ENCODE measurements at regions of chr2 and their contacts with region 1.

Region 1: DNA sequence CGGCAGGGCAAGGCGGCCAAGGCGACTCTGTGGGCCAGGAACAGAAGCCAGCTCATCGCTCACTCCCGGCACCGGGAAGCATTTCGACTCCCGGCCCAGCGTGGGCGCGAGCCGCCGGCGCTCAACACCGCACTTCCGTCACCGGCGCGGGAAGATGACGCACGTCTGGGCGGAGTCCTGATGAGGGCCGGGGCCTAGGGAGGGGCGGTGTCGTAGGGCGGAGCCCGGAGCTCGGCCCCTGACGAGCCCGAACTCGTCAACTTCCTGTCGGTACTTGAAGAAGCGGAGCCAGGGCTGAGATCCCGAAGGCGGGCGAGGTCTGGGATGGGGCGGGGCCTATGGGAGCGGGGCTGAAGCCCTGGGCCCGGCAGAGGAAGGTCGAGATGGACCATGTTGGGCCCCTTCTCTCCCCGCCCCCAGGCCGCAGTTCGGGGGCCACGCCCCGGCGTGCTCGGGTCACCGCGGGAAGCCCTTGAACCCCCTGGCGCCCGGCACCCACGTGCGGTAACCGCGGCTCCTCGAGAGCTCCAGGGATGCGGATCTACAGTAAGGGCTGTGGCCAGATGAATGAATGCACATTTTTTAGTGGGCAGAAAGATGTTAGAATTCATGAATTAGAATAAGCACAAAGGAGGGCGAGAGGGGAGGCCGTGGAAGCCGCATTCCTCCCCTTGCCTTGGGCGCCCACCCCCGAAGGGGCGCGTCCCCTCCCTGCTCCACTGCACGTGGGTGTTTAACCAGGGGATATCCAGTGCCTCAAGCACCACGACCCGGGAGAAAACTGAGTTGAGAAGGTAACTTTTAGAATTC is at the start of gene RNASEH1:
- DNase-seq: peak; percentile 99
- H3K4me3 ChIP-seq: peak within 1 kb of the TSS; percentile 81
- H3K4me3 Mint-ChIP-seq: peak within 1 kb of the TSS; percentile 92
- H3K27ac Mint-ChIP-seq: peak within 1 kb of the TSS; percentile 95
- H3K4me1 ChIP-seq: peaks cover 6% of the 10 kb centered on the region; the same call in 1 of the 2 replicates
- H3K4me1 Mint-ChIP-seq: peaks cover 12% of the 10 kb centered on the region
- H3K27me3 ChIP-seq: no peaks in the 10 kb centered on the region
- H3K27me3 Mint-ChIP-seq: no peaks in the 10 kb centered on the region
- CTCF ChIP-seq: no peak
- total RNA-seq, gene RNASEH1: 41.5 and 47.1 TPM in 2 replicates

Region 2: GRCh38 chr2:3001615-3002560 is 556.5 kb before region 1 on chr2:
- CTCF ChIA-PET with region 1: no interaction called
- POLR2A ChIA-PET with region 1: no interaction called
- intact Hi-C with region 1: no loop called
- DNase-seq: peak in 1 of 2 experiments; percentile 25
- H3K4me3 ChIP-seq: no peak overlapping the region
- H3K4me3 Mint-ChIP-seq: no peak overlapping the region
- H3K27ac Mint-ChIP-seq: no peak overlapping the region
- H3K4me1 ChIP-seq: no peaks in the 10 kb centered on the region
- H3K4me1 Mint-ChIP-seq: no peaks in the 10 kb centered on the region
- H3K27me3 ChIP-seq: no peaks in the 10 kb centered on the region
- H3K27me3 Mint-ChIP-seq: peaks cover 24% of the 10 kb centered on the region
- CTCF ChIP-seq: peak in 1 of 2 experiments; percentile 41

Region 3: GRCh38 chr2:3334392-3335345 is 223.7 kb before region 1 on chr2:
- CTCF ChIA-PET with region 1: no interaction called
- POLR2A ChIA-PET with region 1: no interaction called
- intact Hi-C with region 1: no loop called
- DNase-seq: no peak
- H3K4me3 ChIP-seq: no peak overlapping the region
- H3K4me3 Mint-ChIP-seq: no peak overlapping the region
- H3K27ac Mint-ChIP-seq: no peak overlapping the region
- H3K4me1 ChIP-seq: no peaks in the 10 kb centered on the region
- H3K4me1 Mint-ChIP-seq: no peaks in the 10 kb centered on the region
- H3K27me3 ChIP-seq: no peaks in the 10 kb centered on the region
- H3K27me3 Mint-ChIP-seq: no peaks in the 10 kb centered on the region
- CTCF ChIP-seq: no peak

Region 4: DNA sequence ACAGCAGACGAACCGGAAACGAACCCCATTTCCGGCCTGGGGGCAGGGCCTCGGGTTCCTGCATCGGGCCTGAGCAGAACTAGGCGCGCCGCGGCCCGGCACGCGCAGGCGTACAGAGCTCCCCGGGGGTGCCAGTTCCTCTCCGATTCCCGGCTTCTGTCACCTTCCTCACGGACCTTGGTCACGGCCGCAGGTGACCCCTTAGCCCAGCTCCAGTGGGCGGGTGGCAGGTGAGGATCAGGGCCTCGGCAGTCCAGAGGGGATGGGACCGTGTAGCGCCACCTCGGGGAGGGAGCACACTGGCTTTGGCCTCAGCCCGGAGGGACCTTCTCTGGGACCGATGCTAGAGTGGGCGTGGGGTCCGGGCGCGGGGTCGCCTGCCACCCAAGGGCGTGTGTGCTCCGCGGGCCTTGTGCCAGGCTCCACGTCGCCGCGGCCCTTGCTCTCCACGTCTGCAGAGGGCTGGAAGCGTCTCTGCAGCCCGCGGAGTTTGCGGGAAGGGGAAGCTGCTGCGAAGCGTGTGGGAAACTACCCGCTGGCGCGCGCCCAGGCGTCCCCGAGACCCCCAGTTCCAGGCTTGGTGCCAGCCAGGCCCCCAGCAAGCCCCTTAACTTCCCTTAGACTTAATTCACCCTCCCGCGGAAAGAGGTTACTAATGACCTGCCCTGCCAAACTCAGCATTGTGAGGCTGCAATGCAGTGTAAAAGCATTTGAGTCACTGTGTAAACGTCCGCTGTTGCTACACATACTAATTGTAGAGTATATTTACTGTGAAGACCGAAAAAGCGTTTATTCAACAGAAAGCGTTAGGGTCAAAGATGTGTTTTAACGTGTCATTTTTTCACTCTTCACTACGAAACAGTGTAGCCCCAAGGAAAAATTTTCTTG is 178.5 kb before region 1 on chr2 and contains the start of gene TRAPPC12:
- CTCF ChIA-PET with region 1: no interaction called
- POLR2A ChIA-PET with region 1: interaction called, 10 read pairs
- intact Hi-C with region 1: loop called (anchors 1 kb)
- DNase-seq: peak; percentile 95 to 97
- H3K4me3 ChIP-seq: peak within 1 kb of the TSS; percentile 91
- H3K4me3 Mint-ChIP-seq: peak within 1 kb of the TSS; percentile 99
- H3K27ac Mint-ChIP-seq: peak within 1 kb of the TSS; percentile 96
- H3K4me1 ChIP-seq: peaks cover 10% of the 10 kb centered on the region
- H3K4me1 Mint-ChIP-seq: peaks cover 6% of the 10 kb centered on the region
- H3K27me3 ChIP-seq: no peaks in the 10 kb centered on the region
- H3K27me3 Mint-ChIP-seq: no peaks in the 10 kb centered on the region
- CTCF ChIP-seq: peak in 1 of 2 experiments; percentile 79
- total RNA-seq, gene TRAPPC12: 84.2 and 85.0 TPM in 2 replicates

Region 5: GRCh38 chr2:3483227-3483985 is 75.0 kb before region 1 on chr2:
- CTCF ChIA-PET with region 1: interaction called, 4 read pairs
- POLR2A ChIA-PET with region 1: no interaction called
- intact Hi-C with region 1: loop called (anchors 1 kb)
- DNase-seq: peak; percentile 98 to 99
- H3K4me3 ChIP-seq: peak overlapping the region; percentile 42
- H3K4me3 Mint-ChIP-seq: peak overlapping the region; percentile 77
- H3K27ac Mint-ChIP-seq: peak overlapping the region; percentile 93
- H3K4me1 ChIP-seq: peaks cover 12% of the 10 kb centered on the region
- H3K4me1 Mint-ChIP-seq: peaks cover 10% of the 10 kb centered on the region
- H3K27me3 ChIP-seq: no peaks in the 10 kb centered on the region
- H3K27me3 Mint-ChIP-seq: no peaks in the 10 kb centered on the region
- CTCF ChIP-seq: no peak

Region 6: GRCh38 chr2:3518496-3519254 is 39.7 kb before region 1 on chr2:
- CTCF ChIA-PET with region 1: interaction called, 3 read pairs
- POLR2A ChIA-PET with region 1: interaction called, 12 read pairs
- intact Hi-C with region 1: loop called (anchors 1 kb)
- DNase-seq: peak; percentile 99
- H3K4me3 ChIP-seq: peak overlapping the region; percentile 94
- H3K4me3 Mint-ChIP-seq: peak overlapping the region; percentile 81
- H3K27ac Mint-ChIP-seq: peak overlapping the region; percentile 68
- H3K4me1 ChIP-seq: peaks cover 28% of the 10 kb centered on the region
- H3K4me1 Mint-ChIP-seq: peaks cover 39% of the 10 kb centered on the region
- H3K27me3 ChIP-seq: no peaks in the 10 kb centered on the region
- H3K27me3 Mint-ChIP-seq: no peaks in the 10 kb centered on the region
- CTCF ChIP-seq: no peak

Region 7: GRCh38 chr2:3536682-3537632 is 21.5 kb before region 1 on chr2:
- CTCF ChIA-PET with region 1: interaction called, 5 read pairs
- POLR2A ChIA-PET with region 1: interaction called, 15 read pairs
- intact Hi-C with region 1: loop called (anchors 1 kb)
- DNase-seq: peak; percentile 84 to 87
- H3K4me3 ChIP-seq: peak overlapping the region; percentile 54
- H3K4me3 Mint-ChIP-seq: peak overlapping the region; percentile 95
- H3K27ac Mint-ChIP-seq: peak overlapping the region; percentile 99
- H3K4me1 ChIP-seq: peaks cover 7% of the 10 kb centered on the region; the same call in 1 of the 2 replicates
- H3K4me1 Mint-ChIP-seq: peaks cover 7% of the 10 kb centered on the region
- H3K27me3 ChIP-seq: no peaks in the 10 kb centered on the region
- H3K27me3 Mint-ChIP-seq: no peaks in the 10 kb centered on the region
- CTCF ChIP-seq: peak; percentile 46 to 81

Region 8: GRCh38 chr2:3575534-3576262 is 17.3 kb after region 1 on chr2:
- CTCF ChIA-PET with region 1: interaction called, 5 read pairs
- POLR2A ChIA-PET with region 1: interaction called, 22 read pairs
- intact Hi-C with region 1: loop called (anchors 1 kb)
- DNase-seq: no peak
- H3K4me3 ChIP-seq: peak overlapping the region; percentile 97
- H3K4me3 Mint-ChIP-seq: peak overlapping the region; percentile 95
- H3K27ac Mint-ChIP-seq: peak overlapping the region; percentile 96
- H3K4me1 ChIP-seq: peaks cover 17% of the 10 kb centered on the region
- H3K4me1 Mint-ChIP-seq: peaks cover 34% of the 10 kb centered on the region
- H3K27me3 ChIP-seq: no peaks in the 10 kb centered on the region
- H3K27me3 Mint-ChIP-seq: no peaks in the 10 kb centered on the region
- CTCF ChIP-seq: no peak

Region 9: GRCh38 chr2:3644891-3645605 is 86.6 kb after region 1 on chr2:
- CTCF ChIA-PET with region 1: no interaction called
- POLR2A ChIA-PET with region 1: no interaction called
- intact Hi-C with region 1: loop called (anchors 1 kb)
- DNase-seq: no peak
- H3K4me3 ChIP-seq: no peak overlapping the region
- H3K4me3 Mint-ChIP-seq: no peak overlapping the region
- H3K27ac Mint-ChIP-seq: peak overlapping the region; percentile 62
- H3K4me1 ChIP-seq: peaks cover 18% of the 10 kb centered on the region
- H3K4me1 Mint-ChIP-seq: peaks cover 21% of the 10 kb centered on the region
- H3K27me3 ChIP-seq: no peaks in the 10 kb centered on the region
- H3K27me3 Mint-ChIP-seq: no peaks in the 10 kb centered on the region
- CTCF ChIP-seq: no peak

Region 10: DNA sequence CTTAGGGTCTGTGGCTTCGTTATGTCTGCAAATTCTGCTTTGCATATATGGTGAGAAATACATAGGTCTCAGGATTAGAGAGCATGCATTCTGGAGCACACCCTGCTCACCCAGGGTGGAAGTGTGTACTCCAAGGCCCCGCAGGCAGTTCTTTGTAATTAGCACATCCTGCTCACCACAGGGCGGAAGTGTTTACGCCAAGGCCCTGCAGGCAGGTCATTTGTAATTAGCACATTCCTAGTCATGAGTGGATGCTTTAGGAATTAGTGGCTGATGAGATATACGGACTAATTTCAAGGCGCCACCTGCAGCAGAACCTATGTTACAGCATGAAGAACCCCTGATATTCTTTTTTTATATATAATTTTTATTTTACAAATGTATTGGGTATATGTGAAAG is 103.8 kb after region 1 on chr2:
- CTCF ChIA-PET with region 1: no interaction called
- POLR2A ChIA-PET with region 1: no interaction called
- intact Hi-C with region 1: no loop called
- DNase-seq: peak in 1 of 2 experiments; percentile 21
- H3K4me3 ChIP-seq: no peak overlapping the region
- H3K4me3 Mint-ChIP-seq: no peak overlapping the region
- H3K27ac Mint-ChIP-seq: no peak overlapping the region
- H3K4me1 ChIP-seq: no peaks in the 10 kb centered on the region
- H3K4me1 Mint-ChIP-seq: no peaks in the 10 kb centered on the region
- H3K27me3 ChIP-seq: no peaks in the 10 kb centered on the region
- H3K27me3 Mint-ChIP-seq: no peaks in the 10 kb centered on the region
- CTCF ChIP-seq: no peak

Measured in Caco-2 (cell line).